ENCODE measurements at regions of chr1 and their contacts with region 1.

Region 1: DNA sequence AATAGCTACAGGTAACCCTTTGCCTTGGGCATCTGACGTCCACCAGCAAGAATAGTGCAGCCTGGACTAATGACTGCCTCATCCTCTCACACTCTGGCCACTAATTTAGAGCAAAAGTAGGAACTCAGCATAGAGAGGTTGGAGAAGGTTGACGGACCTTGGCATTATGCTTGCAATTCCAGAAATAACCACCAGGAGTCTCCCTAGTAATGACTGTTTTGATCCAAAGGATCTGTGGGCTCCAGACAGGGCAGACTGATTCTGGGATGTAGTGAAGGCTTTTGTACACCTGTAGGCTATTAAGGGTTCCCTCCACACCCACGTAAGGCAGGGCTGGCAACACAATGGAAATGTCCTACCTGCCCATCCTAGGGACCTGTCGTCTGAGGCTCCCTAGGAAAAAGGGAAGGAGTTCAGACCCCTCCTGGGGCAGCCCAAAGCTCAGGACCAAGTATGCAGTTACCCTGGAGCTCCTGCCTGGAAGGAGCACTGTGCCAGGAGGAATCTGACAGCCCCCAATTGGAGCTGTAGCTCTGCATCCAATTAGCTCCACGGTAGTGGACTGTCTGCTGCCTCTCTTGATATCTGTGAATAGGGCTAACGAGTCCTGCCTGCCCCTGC is 91.0 kb upstream of the TMEM51 start:
- DNase-seq: no peak
- ATAC-seq: peak; percentile 28; the same call in 1 of the 2 replicates
- H3K4me3 ChIP-seq: no peak overlapping the region
- H3K27ac ChIP-seq: no peak overlapping the region
- H3K4me1 ChIP-seq: peaks cover 0 to 6% of the 10 kb centered on the region in 2 experiments; a peak in 1 of 4 replicates
- H3K27me3 ChIP-seq: no peaks in the 10 kb centered on the region
- CTCF ChIP-seq: peak; percentile 45 to 90 (median 67); a peak in 5 of 6 replicates
- POLR2A ChIP-seq: no peak
- RAD21 ChIP-seq: peak; percentile 60

Region 2: GRCh38 chr1:15046487-15047165 is 16.0 kb before region 1 on chr1:
- CTCF ChIA-PET with region 1: no interaction called
- POLR2A ChIA-PET with region 1: no interaction called
- RAD21 ChIA-PET with region 1: no interaction called
- intact Hi-C with region 1: no loop called
- DNase-seq: peak; percentile 33
- ATAC-seq: peak; percentile 87
- H3K4me3 ChIP-seq: no peak overlapping the region
- H3K27ac ChIP-seq: no peak overlapping the region
- H3K4me1 ChIP-seq: no peaks in the 10 kb centered on the region
- H3K27me3 ChIP-seq: no peaks in the 10 kb centered on the region
- CTCF ChIP-seq: peak; percentile 73 to 93 (median 91)
- POLR2A ChIP-seq: no peak
- RAD21 ChIP-seq: peak; percentile 94

Region 3: GRCh38 chr1:15100121-15100874 is 37.7 kb after region 1 on chr1:
- CTCF ChIA-PET with region 1: interaction called, 3 read pairs
- POLR2A ChIA-PET with region 1: no interaction called
- RAD21 ChIA-PET with region 1: no interaction called
- intact Hi-C with region 1: loop called (anchors 2 kb)
- DNase-seq: peak; percentile 37
- ATAC-seq: peak; percentile 93
- H3K4me3 ChIP-seq: no peak overlapping the region
- H3K27ac ChIP-seq: no peak overlapping the region
- H3K4me1 ChIP-seq: no peaks in the 10 kb centered on the region
- H3K27me3 ChIP-seq: peaks cover 12% of the 10 kb centered on the region; the same call in 1 of the 2 replicates
- CTCF ChIP-seq: peak; percentile 81 to 98 (median 97)
- POLR2A ChIP-seq: no peak
- RAD21 ChIP-seq: peak; percentile 97

Measured in HCT116 (cell line).